ENCODE measurements at regions of chr19 and their contacts with region 1.

Region 1: DNA sequence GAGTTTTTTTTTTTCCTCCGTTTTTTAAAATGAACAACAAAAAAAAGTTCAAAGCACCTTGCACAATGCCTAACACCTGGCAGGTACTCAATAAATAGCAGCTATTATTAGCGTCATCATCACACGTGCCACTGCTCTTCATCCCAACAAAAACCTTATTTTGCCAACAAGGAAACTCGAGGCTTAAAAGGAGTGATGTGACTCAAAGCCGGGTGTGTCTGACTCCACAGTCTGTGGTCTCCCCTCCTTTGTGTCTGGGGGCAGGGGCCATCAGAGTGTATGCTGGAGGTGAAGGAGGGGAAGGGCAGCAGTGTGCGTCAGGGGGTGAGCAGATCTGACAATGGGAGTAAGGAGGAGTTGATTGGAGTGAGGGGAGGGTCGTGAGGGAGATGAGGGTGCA is 34.1 kb upstream of the POU2F2 start:
- DNase-seq: no peak
- H3K4me3 Mint-ChIP-seq: no peak overlapping the region
- H3K27ac Mint-ChIP-seq: no peak overlapping the region
- H3K4me1 Mint-ChIP-seq: no peaks in the 10 kb centered on the region
- H3K27me3 Mint-ChIP-seq: peaks cover 5% of the 10 kb centered on the region

Region 2: DNA sequence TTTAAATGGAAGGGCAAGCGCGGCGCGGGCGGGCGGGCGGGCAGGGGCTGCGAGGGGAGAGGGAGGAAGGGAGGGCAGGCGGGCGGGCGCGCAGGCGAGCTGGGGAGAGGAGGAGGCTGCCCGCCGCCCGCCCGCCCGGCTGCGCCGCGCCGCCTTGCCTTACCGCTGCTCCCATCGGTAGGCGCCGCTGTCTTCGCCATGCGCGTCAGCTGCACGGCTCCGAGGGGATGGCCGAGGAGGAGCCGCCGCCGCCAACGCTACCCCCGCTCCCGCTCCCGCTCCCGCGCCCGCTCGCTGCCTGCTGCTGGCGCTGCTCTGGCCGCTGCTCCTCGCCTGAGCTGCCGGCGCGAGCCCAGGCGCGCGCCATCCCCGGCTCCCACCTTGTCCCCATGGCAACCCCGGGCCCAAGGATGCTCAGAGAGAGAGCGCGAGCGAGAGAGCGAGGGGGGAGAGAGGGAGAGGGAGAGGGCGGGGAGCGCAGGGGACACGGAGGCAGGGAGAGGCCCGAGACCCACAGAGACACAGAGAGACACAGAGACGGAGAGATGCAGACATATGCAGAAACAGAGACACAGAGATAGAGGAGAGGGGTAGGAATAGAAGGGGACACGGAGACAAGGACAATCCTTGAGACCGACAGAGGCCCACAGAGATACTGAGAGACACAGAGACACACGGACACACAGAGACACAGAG is 10.8 kb after region 1 on chr19:
- CTCF ChIA-PET with region 1: interaction called, 15 read pairs
- POLR2A ChIA-PET with region 1: no interaction called
- DNase-seq: peak; percentile 76
- H3K4me3 Mint-ChIP-seq: no peak overlapping the region
- H3K27ac Mint-ChIP-seq: no peak overlapping the region
- H3K4me1 Mint-ChIP-seq: peaks cover 17% of the 10 kb centered on the region
- H3K27me3 Mint-ChIP-seq: peaks cover 25% of the 10 kb centered on the region

Measured in activated CD4-positive, alpha-beta T cell treated with anti-CD3 and anti-CD28 coated beads, Interleukin-2, amount 10 ng/mL, durations not matched to agents 7 days and 5 days (primary cell).